MCF 10A (cell line): ENCODE measurements at regions of chr3 and their contacts with region 1.

Region 1: DNA sequence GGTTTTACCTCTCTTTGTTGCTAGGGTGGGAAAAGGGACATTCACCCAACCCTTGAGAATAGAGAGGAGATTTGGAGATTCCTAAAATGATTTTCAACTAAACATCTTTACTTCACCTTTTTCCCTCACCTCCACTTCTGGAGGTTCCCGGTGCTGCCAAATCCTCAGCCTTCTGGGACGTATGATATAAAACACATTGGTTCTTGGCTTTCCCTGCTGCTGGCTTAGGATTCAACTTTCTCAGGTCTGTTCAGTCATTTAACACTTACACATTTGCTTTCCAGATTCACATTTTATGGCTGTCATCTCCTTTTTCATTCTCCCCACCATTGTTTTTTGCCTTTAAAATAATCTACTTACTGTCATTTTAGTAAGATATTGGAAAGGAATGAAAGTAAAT is 106.6 kb downstream of the PIK3R4 start:
- DNase-seq: no peak
- H3K4me3 Mint-ChIP-seq: no peak overlapping the region
- H3K27ac Mint-ChIP-seq: no peak overlapping the region
- H3K4me1 Mint-ChIP-seq: no peaks in the 10 kb centered on the region
- H3K27me3 Mint-ChIP-seq: peaks cover 36% of the 10 kb centered on the region
- CTCF ChIP-seq: no peak

Region 2: GRCh38 chr3:130725746-130726145 is 85.7 kb after region 1 on chr3:
- CTCF ChIA-PET with region 1: interaction called, 10 read pairs
- POLR2A ChIA-PET with region 1: interaction called, 3 read pairs
- intact Hi-C with region 1: no loop called
- DNase-seq: no peak
- H3K4me3 Mint-ChIP-seq: no peak overlapping the region
- H3K27ac Mint-ChIP-seq: no peak overlapping the region
- H3K4me1 Mint-ChIP-seq: peaks cover 5% of the 10 kb centered on the region
- H3K27me3 Mint-ChIP-seq: no peaks in the 10 kb centered on the region
- CTCF ChIP-seq: no peak